ENCODE measurements at regions of chr22 and their contacts with region 1.

Region 1: GRCh38 chr22:20507253-20508066 is at the start of gene MED15:
- DNase-seq: peak; percentile 71 to 93 (median 88)
- ATAC-seq: peak; percentile 81
- H3K4me3 ChIP-seq: peak within 1 kb of the TSS; percentile 92 to 100
- H3K4me3 Mint-ChIP-seq: peak within 1 kb of the TSS; percentile 95
- H3K27ac ChIP-seq: peak within 1 kb of the TSS; percentile 86 to 95
- H3K27ac Mint-ChIP-seq: peak within 1 kb of the TSS; percentile 96
- H3K4me1 ChIP-seq: peaks cover 34% of the 10 kb centered on the region
- H3K4me1 Mint-ChIP-seq: peaks cover 49% of the 10 kb centered on the region
- H3K27me3 ChIP-seq: no peaks in the 10 kb centered on the region
- H3K27me3 Mint-ChIP-seq: no peaks in the 10 kb centered on the region
- CTCF ChIP-seq: no peak
- total RNA-seq, gene MED15: 316 TPM

Region 2: DNA sequence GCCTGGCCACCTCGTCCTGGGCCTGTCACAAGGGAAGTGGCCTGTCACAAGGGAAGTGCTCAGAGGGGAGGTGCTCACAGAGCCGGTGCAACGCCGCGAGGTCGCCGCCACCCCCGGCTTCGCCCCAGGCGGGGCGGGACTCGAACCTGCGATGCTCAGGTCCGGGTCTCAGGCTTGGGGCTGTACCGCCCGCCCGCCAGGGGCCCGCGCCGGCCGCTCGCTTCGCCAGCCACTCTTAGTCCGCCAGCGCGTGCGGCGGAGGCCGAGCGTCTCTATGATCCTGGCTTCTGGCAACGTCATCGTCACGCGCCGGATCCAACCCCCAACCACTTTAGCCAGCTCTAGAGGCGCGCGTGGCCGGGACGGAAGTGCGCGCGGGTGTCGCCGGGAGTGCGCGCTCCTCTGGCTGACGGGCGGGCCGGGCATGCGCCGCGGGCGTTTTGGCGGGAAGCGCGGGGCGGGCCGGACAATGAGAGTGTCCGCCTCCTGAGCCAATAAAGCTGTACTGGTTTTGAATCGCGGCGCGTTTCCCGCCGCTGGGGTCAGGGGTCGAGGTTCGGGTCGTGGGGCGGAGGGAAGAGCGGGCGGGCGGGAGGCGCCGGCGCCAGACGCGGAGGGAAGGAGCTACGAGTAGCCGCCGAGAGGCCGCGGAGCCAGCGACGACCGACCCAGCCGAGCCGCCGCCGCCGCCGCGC is 390.4 kb before region 1 on chr22 and contains the start of gene TRMT2A:
- CTCF ChIA-PET with region 1: no interaction called
- POLR2A ChIA-PET with region 1: no interaction called
- intact Hi-C with region 1: loop called in 1 of 2 experiments (anchors 1 kb)
- DNase-seq: peak; percentile 91 to 99 (median 96)
- ATAC-seq: peak; percentile 80
- H3K4me3 ChIP-seq: peak within 1 kb of the TSS; percentile 80 to 96
- H3K4me3 Mint-ChIP-seq: peak within 1 kb of the TSS; percentile 90
- H3K27ac ChIP-seq: peak within 1 kb of the TSS; percentile 81 to 94
- H3K27ac Mint-ChIP-seq: peak within 1 kb of the TSS; percentile 93
- H3K4me1 ChIP-seq: peaks cover 38% of the 10 kb centered on the region
- H3K4me1 Mint-ChIP-seq: peaks cover 43% of the 10 kb centered on the region
- H3K27me3 ChIP-seq: no peaks in the 10 kb centered on the region
- H3K27me3 Mint-ChIP-seq: no peaks in the 10 kb centered on the region
- CTCF ChIP-seq: no peak
- total RNA-seq, gene TRMT2A: 57.8 to 62.8 TPM

Region 3: GRCh38 chr22:20319745-20320658 is 187.5 kb before region 1 on chr22 and contains the start of gene DGCR6L:
- CTCF ChIA-PET with region 1: no interaction called
- POLR2A ChIA-PET with region 1: no interaction called
- intact Hi-C with region 1: loop called in 1 of 2 experiments (anchors 5 kb)
- DNase-seq: peak; percentile 91 to 99 (median 97)
- ATAC-seq: peak; percentile 76
- H3K4me3 ChIP-seq: peak within 1 kb of the TSS; percentile 88 to 97
- H3K4me3 Mint-ChIP-seq: peak within 1 kb of the TSS; percentile 90
- H3K27ac ChIP-seq: peak within 1 kb of the TSS; percentile 69 to 70
- H3K27ac Mint-ChIP-seq: peak within 1 kb of the TSS; percentile 89
- H3K4me1 ChIP-seq: peaks cover 51% of the 10 kb centered on the region
- H3K4me1 Mint-ChIP-seq: peaks cover 62% of the 10 kb centered on the region
- H3K27me3 ChIP-seq: no peaks in the 10 kb centered on the region
- H3K27me3 Mint-ChIP-seq: no peaks in the 10 kb centered on the region
- CTCF ChIP-seq: no peak
- total RNA-seq, gene DGCR6L: 29.8 to 32.9 TPM

Region 4: DNA sequence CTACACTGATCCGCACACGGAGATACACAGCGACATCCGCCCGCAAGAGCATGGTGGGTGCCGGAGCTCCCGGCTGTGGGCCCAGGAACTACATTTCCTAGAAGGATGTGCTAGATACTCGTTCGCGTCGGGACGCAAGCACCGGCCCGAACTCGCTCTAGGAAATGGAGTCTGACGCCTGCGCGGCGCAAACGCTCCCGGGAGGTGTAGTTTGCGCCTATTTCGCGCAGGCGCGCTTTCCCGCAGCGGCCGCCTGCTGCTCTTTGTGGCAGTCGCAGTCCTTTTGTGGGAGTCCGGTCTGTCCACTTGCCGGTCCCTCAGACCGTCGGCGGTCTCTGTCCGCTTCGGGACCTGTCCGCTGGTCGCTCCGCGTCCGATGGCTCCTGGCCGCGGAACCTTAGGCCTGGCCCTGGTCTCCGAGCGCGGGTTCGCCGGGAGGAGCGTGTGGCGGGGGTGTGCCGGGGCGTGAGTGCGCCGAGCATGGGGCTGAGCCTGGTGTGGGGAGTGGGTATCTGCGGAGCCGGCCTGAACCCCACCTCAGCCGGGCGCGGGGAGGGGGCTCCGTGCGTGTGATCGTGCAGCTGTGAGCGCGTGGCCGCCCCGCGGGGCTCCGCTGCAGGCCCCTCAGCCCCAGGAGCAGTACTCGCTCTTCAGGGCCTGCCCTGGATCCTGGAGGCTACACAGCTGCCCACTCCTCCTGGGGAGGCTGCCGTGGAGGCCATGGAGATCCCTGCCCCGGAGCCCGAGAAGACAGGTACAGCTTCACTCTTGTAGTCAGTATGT is 113.4 kb before region 1 on chr22 and contains the start of gene ZNF74:
- CTCF ChIA-PET with region 1: no interaction called
- POLR2A ChIA-PET with region 1: no interaction called
- intact Hi-C with region 1: loop called in 1 of 2 experiments (anchors 1 kb)
- DNase-seq: peak; percentile 68 to 95 (median 84)
- ATAC-seq: peak; percentile 98
- H3K4me3 ChIP-seq: peak within 1 kb of the TSS; percentile 69 to 86
- H3K4me3 Mint-ChIP-seq: peak within 1 kb of the TSS; percentile 87
- H3K27ac ChIP-seq: peak within 1 kb of the TSS; percentile 46 to 79
- H3K27ac Mint-ChIP-seq: peak within 1 kb of the TSS; percentile 95
- H3K4me1 ChIP-seq: peaks cover 21% of the 10 kb centered on the region
- H3K4me1 Mint-ChIP-seq: peaks cover 37% of the 10 kb centered on the region
- H3K27me3 ChIP-seq: no peaks in the 10 kb centered on the region
- H3K27me3 Mint-ChIP-seq: no peaks in the 10 kb centered on the region
- CTCF ChIP-seq: no peak
- total RNA-seq, gene ZNF74: 1.9 to 2.1 TPM

Region 5: DNA sequence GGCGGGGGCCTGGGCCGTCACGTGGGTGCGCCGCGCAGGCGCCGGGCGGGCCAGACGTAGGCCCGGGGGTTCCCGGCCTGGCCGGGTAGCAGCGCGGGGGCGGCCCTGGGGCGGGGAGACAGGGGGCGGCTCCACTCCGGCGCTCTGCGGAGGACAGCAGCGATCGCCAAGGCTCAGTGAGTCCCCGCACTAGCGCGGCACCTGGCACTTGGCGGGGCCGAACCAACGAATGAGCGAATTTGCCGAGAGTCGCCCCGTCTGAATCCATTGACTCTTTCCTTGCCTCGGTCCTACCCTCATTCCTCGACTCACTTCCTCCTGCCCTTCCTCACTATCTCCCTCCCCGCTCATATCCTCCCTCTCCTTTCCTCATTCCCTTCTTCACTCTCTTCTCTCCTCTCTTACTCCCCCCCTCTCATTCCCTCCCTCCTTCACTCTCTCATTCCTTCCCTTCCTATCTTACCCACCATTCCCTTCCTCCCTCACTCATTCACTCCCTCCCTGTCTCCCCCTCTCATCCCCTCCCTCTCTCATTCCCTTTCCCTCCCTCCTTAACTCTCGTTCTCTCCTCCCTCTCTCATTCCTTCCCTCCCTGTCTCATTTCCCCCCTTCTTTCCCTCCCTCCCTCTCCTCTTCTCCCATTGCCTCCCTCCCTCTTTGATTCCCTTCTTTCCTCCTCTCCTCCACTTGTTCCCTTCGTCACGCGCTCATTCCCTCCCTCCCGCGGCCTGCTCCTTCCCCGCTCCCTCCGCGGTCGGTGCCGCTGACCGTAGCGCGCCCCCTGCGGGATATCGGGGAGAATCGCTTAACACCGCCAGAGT is 11.4 kb before region 1 on chr22:
- CTCF ChIA-PET with region 1: interaction called, 5 read pairs
- POLR2A ChIA-PET with region 1: no interaction called
- intact Hi-C with region 1: loop called (anchors 1 kb)
- DNase-seq: peak; percentile 83 to 96 (median 91)
- ATAC-seq: peak; percentile 96
- H3K4me3 ChIP-seq: peak overlapping the region; percentile 75 to 83
- H3K4me3 Mint-ChIP-seq: peak overlapping the region; percentile 89
- H3K27ac ChIP-seq: peak overlapping the region; percentile 61 to 98
- H3K27ac Mint-ChIP-seq: peak overlapping the region; percentile 91
- H3K4me1 ChIP-seq: peaks cover 42% of the 10 kb centered on the region
- H3K4me1 Mint-ChIP-seq: peaks cover 41% of the 10 kb centered on the region
- H3K27me3 ChIP-seq: no peaks in the 10 kb centered on the region
- H3K27me3 Mint-ChIP-seq: no peaks in the 10 kb centered on the region
- CTCF ChIP-seq: peak; percentile 95

Region 6: GRCh38 chr22:20531315-20532201 is 24.1 kb after region 1 on chr22:
- CTCF ChIA-PET with region 1: interaction called, 3 read pairs
- POLR2A ChIA-PET with region 1: interaction called, 6 read pairs
- intact Hi-C with region 1: loop called in 1 of 2 experiments (anchors 2 kb)
- DNase-seq: peak in 1 of 9 experiments; percentile 8
- ATAC-seq: peak; percentile 34
- H3K4me3 ChIP-seq: no peak overlapping the region
- H3K4me3 Mint-ChIP-seq: peak overlapping the region; percentile 4
- H3K27ac ChIP-seq: peak overlapping the region in 1 of 2 experiments; percentile 46
- H3K27ac Mint-ChIP-seq: peak overlapping the region; percentile 90
- H3K4me1 ChIP-seq: peaks cover 49% of the 10 kb centered on the region
- H3K4me1 Mint-ChIP-seq: peaks cover 76% of the 10 kb centered on the region
- H3K27me3 ChIP-seq: no peaks in the 10 kb centered on the region
- H3K27me3 Mint-ChIP-seq: no peaks in the 10 kb centered on the region
- CTCF ChIP-seq: no peak

Region 7: GRCh38 chr22:20550821-20551744 is 43.6 kb after region 1 on chr22:
- CTCF ChIA-PET with region 1: interaction called, 14 read pairs
- POLR2A ChIA-PET with region 1: interaction called, 39 read pairs
- intact Hi-C with region 1: loop called (anchors 2 kb)
- DNase-seq: peak; percentile 41 to 87 (median 68)
- ATAC-seq: peak; percentile 61
- H3K4me3 ChIP-seq: peak overlapping the region; percentile 18 to 46
- H3K4me3 Mint-ChIP-seq: peak overlapping the region; percentile 89
- H3K27ac ChIP-seq: peak overlapping the region; percentile 86 to 87
- H3K27ac Mint-ChIP-seq: peak overlapping the region; percentile 97
- H3K4me1 ChIP-seq: peaks cover 92% of the 10 kb centered on the region
- H3K4me1 Mint-ChIP-seq: peaks cover 90% of the 10 kb centered on the region
- H3K27me3 ChIP-seq: no peaks in the 10 kb centered on the region
- H3K27me3 Mint-ChIP-seq: no peaks in the 10 kb centered on the region
- CTCF ChIP-seq: no peak

Region 8: DNA sequence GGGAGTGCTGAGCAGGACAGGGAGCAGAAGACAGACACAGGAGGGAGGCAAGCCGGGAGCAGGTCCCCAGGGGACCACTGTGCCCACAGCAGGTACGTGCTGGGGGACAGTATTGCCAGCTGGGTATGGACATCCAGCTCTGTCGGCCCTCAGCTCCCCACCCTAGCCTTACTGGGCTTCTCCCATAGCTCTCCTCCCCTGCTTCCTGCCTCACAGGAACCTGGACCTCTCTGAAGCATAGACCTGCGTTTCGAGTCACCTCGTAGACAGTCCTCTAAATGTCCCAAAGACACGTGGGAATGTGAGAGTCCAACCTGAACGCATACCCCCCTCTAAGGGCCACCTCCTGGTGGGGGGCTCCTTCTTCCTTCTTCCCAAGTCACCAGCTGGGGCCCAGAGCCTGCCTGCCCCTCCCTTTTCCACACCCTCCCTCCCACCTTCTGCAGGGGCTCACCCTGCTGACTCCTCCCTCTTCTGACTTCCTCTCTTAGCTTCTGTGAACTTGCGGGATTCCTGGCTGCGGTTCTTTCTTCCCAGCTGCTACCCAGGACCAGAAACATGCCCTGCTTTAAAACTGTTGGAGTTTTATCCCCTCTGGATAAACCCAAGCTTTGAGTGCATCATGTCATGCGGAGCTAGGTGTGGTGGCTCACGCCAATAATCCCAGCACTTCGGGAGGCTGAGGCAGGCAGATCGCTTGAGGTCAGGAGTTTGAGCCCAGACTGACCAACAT is 548.3 kb after region 1 on chr22:
- CTCF ChIA-PET with region 1: no interaction called
- POLR2A ChIA-PET with region 1: no interaction called
- intact Hi-C with region 1: no loop called
- DNase-seq: no peak
- ATAC-seq: no peak
- H3K4me3 ChIP-seq: no peak overlapping the region
- H3K4me3 Mint-ChIP-seq: peak overlapping the region; percentile 26
- H3K27ac ChIP-seq: no peak overlapping the region
- H3K27ac Mint-ChIP-seq: no peak overlapping the region
- H3K4me1 ChIP-seq: peaks cover 10% of the 10 kb centered on the region
- H3K4me1 Mint-ChIP-seq: peaks cover 10% of the 10 kb centered on the region
- H3K27me3 ChIP-seq: no peaks in the 10 kb centered on the region
- H3K27me3 Mint-ChIP-seq: no peaks in the 10 kb centered on the region
- CTCF ChIP-seq: no peak